ENCODE measurements at regions of chr4 and their contacts with region 1.

Region 1: DNA sequence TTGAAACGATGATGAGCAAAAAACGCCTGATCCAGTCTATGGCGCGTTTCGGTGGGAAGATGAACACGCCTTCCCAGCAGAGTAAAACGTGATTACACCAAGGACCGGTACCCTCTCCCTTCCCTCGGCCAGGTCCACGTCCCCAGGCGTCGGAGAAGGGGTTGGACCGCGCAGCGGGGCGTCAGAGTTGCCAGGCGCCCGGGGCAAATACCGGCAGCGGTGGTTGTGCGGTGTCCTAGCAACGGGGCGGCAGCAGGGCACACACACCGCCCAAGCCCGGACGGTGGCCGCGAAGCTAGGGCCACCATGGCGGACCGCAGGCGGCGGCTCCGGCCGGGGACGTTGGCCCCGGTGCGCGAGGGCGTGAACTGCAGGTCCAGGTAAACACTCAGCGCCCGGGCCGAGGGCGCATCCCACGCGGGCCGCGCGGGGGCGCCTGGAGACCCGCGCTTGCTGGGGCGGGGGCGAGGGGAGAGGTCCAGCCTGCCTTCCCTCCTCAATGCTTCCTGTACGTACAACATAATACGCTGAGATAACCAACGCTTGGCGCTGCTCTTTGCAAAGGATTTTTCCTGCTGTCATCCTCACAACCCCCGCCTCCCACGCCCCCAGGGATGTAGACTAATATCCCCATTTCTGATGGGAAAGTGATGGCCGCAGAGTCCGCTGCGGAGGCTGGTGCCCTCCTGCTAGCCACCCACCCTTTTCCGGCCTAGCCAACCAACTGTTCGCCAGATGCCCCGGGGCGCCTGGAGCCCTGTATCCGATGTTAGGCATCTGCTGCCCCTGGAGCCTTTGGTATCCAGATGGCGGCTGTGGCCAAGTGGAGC is at the start of gene FAM47E:
- DNase-seq: peak; percentile 71 to 89 (median 87)
- ATAC-seq: peak; percentile 96 to 99 (median 99)
- H3K4me3 ChIP-seq: peak within 1 kb of the TSS; percentile 20 to 73 (median 63)
- H3K27ac ChIP-seq: peak within 1 kb of the TSS in 7 of 12 donors; percentile 4 to 62 (median 46)
- H3K4me1 ChIP-seq: peaks cover 0 to 17% (median 8%) of the 10 kb centered on the region in 12 donors
- H3K27me3 ChIP-seq: peaks cover 0 to 50% (median 0%) of the 10 kb centered on the region in 9 donors
- CTCF ChIP-seq: peak; percentile 9 to 59 (median 38)
- POLR2A ChIP-seq: peak in 1 of 2 donors; percentile 29
- total RNA-seq, gene FAM47E: 0.48 to 4.9 (median 2.5) TPM

Region 2: DNA sequence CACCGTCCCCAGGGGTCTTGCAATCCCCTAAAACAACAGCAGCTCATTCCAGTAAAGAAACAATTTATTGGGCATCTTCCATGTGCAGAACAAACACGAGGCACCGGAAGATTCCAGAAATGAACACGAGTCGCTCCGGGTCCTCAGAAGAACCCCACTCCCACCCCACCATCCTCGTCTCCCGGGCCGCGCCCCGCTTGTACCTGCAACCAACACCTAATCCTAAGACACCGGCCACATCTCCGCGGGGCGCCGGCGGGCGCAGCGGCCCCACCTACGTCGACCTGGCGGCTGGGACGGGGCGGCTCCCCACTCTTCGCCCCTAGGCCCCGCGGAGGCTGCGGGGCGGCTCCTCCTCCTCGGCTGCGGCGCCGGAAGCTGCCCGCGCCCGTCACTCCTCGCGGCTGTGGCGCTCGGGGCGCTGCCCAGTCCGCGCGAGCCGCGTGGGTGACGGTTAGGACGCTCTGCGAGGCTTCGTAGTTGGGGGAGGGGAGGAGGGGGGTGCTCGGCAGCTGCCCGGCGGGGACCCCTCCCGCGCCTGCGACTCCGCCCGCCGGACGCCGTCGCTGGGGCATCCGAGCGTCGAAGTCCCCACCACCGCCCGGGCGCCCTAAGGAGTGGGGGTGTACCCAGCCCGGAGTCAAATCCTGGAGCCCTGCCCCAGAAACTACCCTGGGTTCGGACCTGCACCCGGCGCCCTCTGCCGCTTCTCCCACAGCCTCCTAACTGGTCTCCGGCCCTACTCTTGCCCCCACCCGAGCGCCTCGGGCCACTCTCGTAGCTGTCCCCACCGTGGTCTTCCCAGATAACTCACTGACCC is 169.3 kb after region 1 on chr4 and contains the start of gene CCDC158:
- intact Hi-C with region 1: loop called in 1 of 10 experiments (anchors 10 kb)
- DNase-seq: peak in 3 of 5 donors; percentile 31 to 65 (median 36)
- ATAC-seq: peak; percentile 24 to 92 (median 71)
- H3K4me3 ChIP-seq: peak within 1 kb of the TSS; percentile 42 to 67 (median 56)
- H3K27ac ChIP-seq: peak within 1 kb of the TSS in 3 of 12 donors; percentile 2 to 38 (median 25)
- H3K4me1 ChIP-seq: peaks cover 0 to 12% (median 3%) of the 10 kb centered on the region in 12 donors
- H3K27me3 ChIP-seq: peaks cover 0 to 14% (median 0%) of the 10 kb centered on the region in 9 donors
- CTCF ChIP-seq: peak in 1 of 12 donors; percentile 13
- POLR2A ChIP-seq: no peak
- total RNA-seq, gene CCDC158: 0.09 to 0.75 (median 0.50) TPM in 7 of 9 donors, not detected in the others

Region 3: GRCh38 chr4:76504613-76505465 is 253.2 kb after region 1 on chr4:
- intact Hi-C with region 1: loop called in 1 of 10 experiments (anchors 10 kb)
- DNase-seq: no peak
- ATAC-seq: peak in 2 of 4 donors; percentile 45 to 47
- H3K4me3 ChIP-seq: no peak overlapping the region
- H3K27ac ChIP-seq: no peak overlapping the region
- H3K4me1 ChIP-seq: no peaks in the 10 kb centered on the region
- H3K27me3 ChIP-seq: no peaks in the 10 kb centered on the region
- CTCF ChIP-seq: peak; percentile 49 to 78 (median 67)
- POLR2A ChIP-seq: no peak

Region 4: GRCh38 chr4:76748649-76749048 is 497.0 kb after region 1 on chr4:
- intact Hi-C with region 1: no loop called
- DNase-seq: no peak
- ATAC-seq: no peak
- H3K4me3 ChIP-seq: no peak overlapping the region
- H3K27ac ChIP-seq: no peak overlapping the region
- H3K4me1 ChIP-seq: peaks cover 0 to 17% (median 1%) of the 10 kb centered on the region in 12 donors
- H3K27me3 ChIP-seq: no peaks in the 10 kb centered on the region
- CTCF ChIP-seq: peak in 4 of 12 donors; percentile 8 to 32 (median 19)
- POLR2A ChIP-seq: no peak

Region 5: DNA sequence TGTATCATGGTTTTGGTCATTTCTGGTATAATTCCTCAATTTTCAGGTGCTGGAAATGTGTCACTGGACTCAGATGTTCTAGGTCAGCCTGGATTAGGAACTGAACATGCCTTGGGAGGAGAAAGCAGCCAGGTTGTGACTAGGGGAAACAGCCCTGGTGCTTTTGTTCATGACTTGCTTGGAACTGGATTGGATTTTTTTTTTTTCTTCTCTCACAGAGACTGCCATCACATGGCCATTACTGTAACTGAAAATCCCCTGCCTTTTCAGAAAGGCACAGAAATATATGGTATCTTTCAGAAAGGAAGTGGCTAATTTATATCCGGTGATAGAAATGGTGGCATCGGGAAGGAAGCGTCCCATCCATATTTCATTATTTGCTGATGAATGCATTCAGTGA is 732.5 kb after region 1 on chr4:
- intact Hi-C with region 1: no loop called
- DNase-seq: no peak
- ATAC-seq: peak in 1 of 4 donors; percentile 21
- H3K4me3 ChIP-seq: no peak overlapping the region
- H3K27ac ChIP-seq: peak overlapping the region; percentile 15 to 78 (median 50)
- H3K4me1 ChIP-seq: peaks cover 0 to 84% (median 51%) of the 10 kb centered on the region in 12 donors
- H3K27me3 ChIP-seq: no peaks in the 10 kb centered on the region
- CTCF ChIP-seq: peak in 6 of 12 donors; percentile 20 to 45 (median 38)
- POLR2A ChIP-seq: no peak

Region 6: DNA sequence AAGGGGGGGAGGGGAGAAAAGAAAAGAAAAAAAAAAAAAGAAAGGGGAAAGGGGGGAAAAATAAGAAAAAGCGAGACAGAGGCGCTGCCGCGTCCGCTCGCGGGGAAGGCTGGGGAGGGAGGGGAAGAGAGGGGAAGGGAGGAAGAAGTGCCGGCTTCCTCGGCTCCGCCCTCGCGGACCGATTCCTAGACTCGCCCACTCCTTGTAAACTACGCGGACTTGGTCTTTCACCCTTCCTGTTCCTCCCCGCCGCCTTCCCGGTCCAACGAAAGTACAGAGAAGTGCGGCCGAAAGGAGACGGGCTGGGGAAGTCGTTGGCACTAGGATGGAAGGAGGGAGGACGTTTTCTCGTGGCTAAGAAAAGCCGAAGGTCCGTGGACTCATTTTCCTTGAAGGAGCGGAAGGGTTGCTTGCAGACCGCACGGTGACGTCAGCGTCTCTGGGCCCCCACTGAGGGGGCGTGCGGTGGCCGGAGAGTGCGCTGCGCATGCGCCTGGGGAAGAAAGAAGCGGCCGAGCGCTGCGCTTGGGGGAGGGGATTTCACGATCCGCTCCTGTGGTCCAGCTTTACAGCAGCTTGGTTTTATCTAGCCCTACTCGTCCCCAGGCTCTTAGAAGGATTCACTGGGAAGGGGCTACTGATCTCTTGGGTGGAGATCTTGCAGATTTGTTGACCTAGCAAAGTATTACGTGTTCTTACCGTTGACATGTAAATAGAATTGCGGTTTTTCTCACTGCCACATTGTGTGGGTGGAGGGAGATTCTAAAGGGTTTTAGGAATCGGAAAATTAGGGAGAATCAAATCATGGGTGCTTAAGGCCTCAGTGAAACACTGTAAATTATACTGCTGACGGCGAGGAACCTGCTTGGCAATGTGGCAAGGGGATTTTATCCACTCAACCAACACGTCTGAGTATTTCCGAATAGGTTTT is 824.5 kb after region 1 on chr4 and contains the start of gene CCNI:
- intact Hi-C with region 1: no loop called
- DNase-seq: peak; percentile 97 to 98 (median 97)
- ATAC-seq: peak; percentile 95 to 96 (median 96)
- H3K4me3 ChIP-seq: peak within 1 kb of the TSS; percentile 77 to 99 (median 89)
- H3K27ac ChIP-seq: peak within 1 kb of the TSS; percentile 93 to 100 (median 99)
- H3K4me1 ChIP-seq: peaks cover 3 to 51% (median 33%) of the 10 kb centered on the region in 12 donors
- H3K27me3 ChIP-seq: no peaks in the 10 kb centered on the region
- CTCF ChIP-seq: no peak
- POLR2A ChIP-seq: peak; percentile 57
- total RNA-seq, gene CCNI: 232 to 356 (median 303) TPM

Measured in heart left ventricle (tissue), 16 donors.